T-cell (primary cell): ENCODE measurements at regions of chr5 and their contacts with region 1.

Region 1: GRCh38 chr5:147822686-147823491 is 8.6 kb downstream of the SPINK1 start:
- DNase-seq: peak in 28 of 35 experiments; percentile 5 to 75 (median 22)
- ATAC-seq: peak; percentile 52 to 67 (median 57)
- H3K4me3 ChIP-seq: no peak overlapping the region
- H3K4me3 Mint-ChIP-seq: no peak overlapping the region
- H3K27ac ChIP-seq: no peak overlapping the region
- H3K27ac Mint-ChIP-seq: no peak overlapping the region
- H3K4me1 ChIP-seq: no peaks in the 10 kb centered on the region
- H3K4me1 Mint-ChIP-seq: no peaks in the 10 kb centered on the region
- H3K27me3 ChIP-seq: no peaks in the 10 kb centered on the region
- H3K27me3 Mint-ChIP-seq: peaks cover 3 to 7% of the 10 kb centered on the region in 2 donors

Region 2: GRCh38 chr5:147628058-147628895 is 194.6 kb before region 1 on chr5:
- CTCF ChIA-PET with region 1: interaction called, 22 to 55 read pairs
- POLR2A ChIA-PET with region 1: no interaction called
- DNase-seq: peak in 30 of 35 experiments; percentile 3 to 72 (median 23)
- ATAC-seq: peak in 3 of 4 experiments; percentile 41 to 53 (median 43)
- H3K4me3 ChIP-seq: no peak overlapping the region
- H3K4me3 Mint-ChIP-seq: no peak overlapping the region
- H3K27ac ChIP-seq: no peak overlapping the region
- H3K27ac Mint-ChIP-seq: no peak overlapping the region
- H3K4me1 ChIP-seq: no peaks in the 10 kb centered on the region
- H3K4me1 Mint-ChIP-seq: no peaks in the 10 kb centered on the region
- H3K27me3 ChIP-seq: no peaks in the 10 kb centered on the region
- H3K27me3 Mint-ChIP-seq: no peaks in the 10 kb centered on the region